HEK293 (cell line): ENCODE measurements at regions of chr19 and their contacts with region 1.

Region 1: GRCh38 chr19:35352448-35353304 is 5.0 kb downstream of the FFAR1 start:
- H3K4me3 ChIP-seq: no peak overlapping the region
- H3K27ac ChIP-seq: no peak overlapping the region
- H3K4me1 ChIP-seq: no peaks in the 10 kb centered on the region
- CTCF ChIP-seq: peak; percentile 95

Region 2: GRCh38 chr19:35184884-35185283 is 167.8 kb before region 1 on chr19:
- CTCF ChIA-PET with region 1: no interaction called
- POLR2A ChIA-PET with region 1: no interaction called
- H3K4me3 ChIP-seq: no peak overlapping the region
- H3K27ac ChIP-seq: no peak overlapping the region
- H3K4me1 ChIP-seq: no peaks in the 10 kb centered on the region
- CTCF ChIP-seq: no peak

Region 3: DNA sequence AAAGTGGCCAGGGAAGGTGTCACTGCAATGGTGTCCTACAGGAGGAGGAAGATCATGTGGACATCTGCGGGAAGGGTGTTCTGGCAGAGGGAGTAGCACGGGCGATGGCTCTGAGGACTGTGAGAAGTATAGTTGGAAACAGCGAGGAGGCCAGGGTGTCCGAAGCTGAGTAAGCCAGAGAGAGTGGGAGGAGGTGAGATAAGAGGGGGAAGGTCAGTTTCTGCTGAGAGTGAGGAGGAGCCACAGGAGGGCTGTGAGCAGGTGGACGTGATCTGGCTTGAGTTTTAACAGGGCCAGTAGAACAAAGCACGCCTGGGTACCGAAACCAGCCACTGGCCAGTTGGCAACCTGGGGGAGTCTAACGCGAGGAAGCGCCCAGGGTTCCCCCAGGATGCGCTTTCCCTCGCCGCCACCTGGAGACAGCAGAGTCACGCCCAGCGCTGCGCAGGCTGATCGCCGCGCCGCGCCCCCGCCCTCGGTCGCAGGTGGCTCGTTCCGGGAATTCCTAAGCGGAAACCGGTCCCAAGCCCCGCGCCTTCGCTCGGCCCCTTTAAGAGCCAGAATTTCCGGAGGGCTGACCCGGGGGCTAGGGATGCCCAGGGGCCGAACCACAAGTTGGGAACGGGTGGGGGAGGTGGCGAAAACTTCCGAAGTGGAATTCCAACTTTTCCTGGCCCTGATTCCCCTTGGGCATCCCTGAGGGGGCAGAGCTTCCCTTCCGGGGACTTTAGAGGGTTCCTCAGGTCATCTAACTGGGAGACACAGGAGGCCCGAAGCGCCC is 105.0 kb before region 1 on chr19:
- CTCF ChIA-PET with region 1: no interaction called
- POLR2A ChIA-PET with region 1: no interaction called
- H3K4me3 ChIP-seq: peak overlapping the region; percentile 63
- H3K27ac ChIP-seq: peak overlapping the region; percentile 98
- H3K4me1 ChIP-seq: peaks cover 9% of the 10 kb centered on the region
- CTCF ChIP-seq: peak; percentile 95

Region 4: DNA sequence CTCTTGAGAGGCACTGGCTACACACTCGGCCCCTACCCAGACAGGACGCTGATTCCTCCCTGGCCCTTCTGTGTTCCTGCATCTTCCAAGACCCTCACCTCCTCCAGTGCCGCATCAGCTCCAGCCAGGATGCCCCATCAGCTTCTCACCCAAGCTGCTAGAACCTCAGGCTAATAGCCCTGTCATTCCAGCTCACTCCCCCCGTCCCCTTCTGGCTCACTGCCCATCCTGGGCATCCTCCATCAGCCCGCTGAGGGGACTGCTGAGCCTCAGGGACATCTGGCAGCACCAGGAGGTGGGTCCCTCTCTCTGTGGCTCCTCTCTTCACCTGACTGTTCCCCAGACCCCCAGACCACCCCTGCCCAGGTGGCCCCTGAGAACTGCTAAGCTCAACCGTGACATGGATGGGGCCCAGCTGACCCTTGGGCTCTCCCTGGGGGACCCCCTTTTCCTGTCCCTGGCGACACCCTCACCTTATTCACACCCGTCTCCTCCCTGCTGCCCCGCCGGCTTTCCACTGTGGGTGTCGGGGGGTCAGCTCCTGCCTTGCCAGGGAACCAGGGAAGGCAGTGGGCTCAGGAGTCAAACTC is 10.4 kb after region 1 on chr19:
- CTCF ChIA-PET with region 1: interaction called, 54 read pairs
- POLR2A ChIA-PET with region 1: interaction called, 3 read pairs
- H3K4me3 ChIP-seq: no peak overlapping the region
- H3K27ac ChIP-seq: no peak overlapping the region
- H3K4me1 ChIP-seq: no peaks in the 10 kb centered on the region
- CTCF ChIP-seq: no peak

Region 5: GRCh38 chr19:35468637-35469036 is 116.0 kb after region 1 on chr19:
- CTCF ChIA-PET with region 1: interaction called, 157 read pairs
- POLR2A ChIA-PET with region 1: no interaction called
- H3K4me3 ChIP-seq: no peak overlapping the region
- H3K27ac ChIP-seq: no peak overlapping the region
- H3K4me1 ChIP-seq: no peaks in the 10 kb centered on the region
- CTCF ChIP-seq: peak; percentile 92

Region 6: DNA sequence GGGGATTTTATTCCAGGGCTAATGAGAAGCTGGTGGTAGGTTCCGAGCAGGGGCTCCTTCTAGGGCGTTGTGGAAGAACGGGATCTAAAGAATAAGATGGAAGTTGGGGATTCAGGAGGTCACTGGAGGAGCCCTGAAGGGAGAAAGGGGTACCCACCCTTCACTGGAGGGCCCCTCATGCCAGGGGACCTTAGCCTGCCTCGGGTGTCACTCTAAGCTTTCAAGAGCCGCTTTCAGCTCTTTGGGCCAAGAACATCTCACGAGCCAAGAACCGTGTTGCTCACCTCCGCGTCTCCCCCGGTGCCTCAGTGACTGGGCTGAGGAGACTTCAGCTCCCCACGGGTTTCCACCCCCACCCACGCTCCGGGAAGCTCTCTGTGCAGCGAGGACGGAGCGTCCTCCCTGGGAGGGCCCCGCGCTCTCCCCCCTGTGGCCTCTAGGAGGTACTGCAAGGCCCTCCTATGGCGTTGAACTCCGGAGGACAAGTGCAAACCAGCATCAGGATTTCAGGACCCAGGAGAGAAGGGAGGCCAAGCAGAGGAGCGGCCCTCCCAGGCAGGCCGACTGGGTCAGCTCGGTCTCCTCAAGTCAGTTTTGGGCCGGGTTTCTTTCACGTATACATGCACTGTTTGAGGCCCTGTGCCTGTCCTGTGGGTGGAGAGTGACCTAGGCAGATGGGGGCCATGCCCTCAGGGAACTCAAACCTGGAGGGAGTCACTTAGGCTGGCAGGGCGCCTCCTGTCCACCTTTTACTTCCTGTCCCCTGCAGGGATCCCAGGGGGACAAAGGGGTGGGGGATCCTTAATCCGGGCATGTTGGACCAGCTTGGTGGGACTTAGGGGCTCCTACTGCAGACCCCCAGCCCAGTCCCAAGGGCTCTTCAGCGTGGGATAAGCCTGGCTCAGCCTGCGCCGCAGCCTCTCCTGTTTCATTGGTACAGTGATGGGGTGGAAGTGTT is 142.7 kb after region 1 on chr19:
- CTCF ChIA-PET with region 1: interaction called, 237 read pairs
- POLR2A ChIA-PET with region 1: interaction called, 13 read pairs
- H3K4me3 ChIP-seq: no peak overlapping the region
- H3K27ac ChIP-seq: no peak overlapping the region
- H3K4me1 ChIP-seq: no peaks in the 10 kb centered on the region
- CTCF ChIP-seq: peak; percentile 99

Region 7: GRCh38 chr19:35545001-35545911 is 192.6 kb after region 1 on chr19 and contains the start of gene TMEM147:
- CTCF ChIA-PET with region 1: interaction called, 25 read pairs
- POLR2A ChIA-PET with region 1: no interaction called
- H3K4me3 ChIP-seq: peak within 1 kb of the TSS; percentile 62
- H3K27ac ChIP-seq: peak within 1 kb of the TSS; percentile 94
- H3K4me1 ChIP-seq: peaks cover 16% of the 10 kb centered on the region
- CTCF ChIP-seq: no peak; the same call in none of the 2 replicates